H1 (cell line): ENCODE measurements at regions of chr17 and their contacts with region 1.

Region 1: DNA sequence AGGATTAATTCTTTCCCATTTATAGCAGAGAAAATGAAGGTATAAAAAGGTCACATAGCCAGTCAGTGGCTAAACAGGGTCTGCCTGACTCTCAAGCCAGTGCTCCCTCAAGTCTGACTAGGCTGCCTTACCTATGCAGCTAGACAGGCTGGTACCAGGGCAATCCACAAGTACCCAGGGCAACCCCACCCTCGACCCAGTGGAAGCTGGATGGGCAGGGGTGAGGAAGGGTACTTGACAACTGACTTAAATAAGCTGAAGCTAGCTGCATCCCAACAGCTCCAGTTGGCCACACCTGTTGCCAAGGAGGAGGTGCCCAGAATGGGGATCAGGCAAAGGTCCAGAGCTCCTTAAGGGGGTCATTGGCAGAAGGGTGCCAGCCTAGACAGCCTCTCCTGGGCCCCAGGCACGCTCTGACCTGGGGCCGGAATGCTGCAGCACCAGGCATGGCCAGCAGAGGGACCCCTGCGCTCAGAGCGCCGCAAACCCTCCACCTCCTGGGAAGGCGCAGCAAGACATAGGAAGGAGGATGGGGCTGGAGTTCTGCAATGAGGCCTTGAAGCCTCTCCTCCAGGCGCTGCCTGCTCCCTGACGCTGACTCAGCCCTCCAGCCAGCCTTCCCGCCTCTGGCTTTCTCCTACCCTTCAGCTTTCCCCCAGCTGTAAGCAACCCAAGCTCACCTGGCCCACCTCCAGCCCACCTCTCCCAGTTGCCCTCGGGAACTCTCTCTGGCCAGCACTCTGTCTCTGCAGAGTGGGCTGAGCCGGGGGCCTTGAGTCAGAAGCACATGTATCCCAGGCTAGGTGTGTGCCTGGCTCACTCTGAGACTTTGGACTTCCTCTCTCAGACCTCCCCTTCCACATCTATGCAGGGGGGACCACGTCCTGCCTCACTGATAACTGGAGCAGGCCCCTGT is 28.8 kb downstream of the MPP2 start:
- DNase-seq: peak; percentile 70 to 97
- H3K4me3 ChIP-seq: no peak overlapping the region
- H3K27ac ChIP-seq: no peak overlapping the region
- H3K4me1 ChIP-seq: peaks cover 0 to 8% (median 6%) of the 10 kb centered on the region in 4 experiments; a peak in 5 of 7 replicates
- H3K27me3 ChIP-seq: no peaks in the 10 kb centered on the region
- CTCF ChIP-seq: peak; percentile 93 to 99 (median 97)
- EP300 ChIP-seq: no peak
- POLR2A ChIP-seq: no peak
- RAD21 ChIP-seq: peak; percentile 82 to 88

Region 2: DNA sequence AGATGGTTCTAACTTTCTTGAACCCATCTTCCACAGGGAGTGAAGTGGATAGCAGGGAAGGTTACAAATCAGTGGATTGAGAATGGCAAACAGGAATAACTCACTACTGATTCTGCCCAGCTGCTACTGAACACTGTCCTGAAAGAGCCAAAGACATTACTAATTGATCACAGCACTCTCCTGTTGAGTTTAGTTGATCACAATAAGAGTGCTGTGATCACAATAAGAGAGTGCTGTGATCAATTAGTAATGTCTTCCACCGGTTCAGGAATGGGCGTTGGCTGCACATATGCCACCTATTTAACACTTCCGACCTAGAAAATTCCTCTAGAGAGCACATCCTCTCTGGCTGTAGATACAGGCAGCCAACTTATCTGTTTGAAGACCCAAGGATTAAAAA is 86.9 kb before region 1 on chr17:
- CTCF ChIA-PET with region 1: interaction called, 14 read pairs
- POLR2A ChIA-PET with region 1: no interaction called
- DNase-seq: no peak
- H3K4me3 ChIP-seq: peak overlapping the region in 1 of 4 experiments; percentile 17; a peak in 1 of 8 replicates
- H3K27ac ChIP-seq: no peak overlapping the region
- H3K4me1 ChIP-seq: no peaks in the 10 kb centered on the region; a peak in 1 of 7 replicates
- H3K27me3 ChIP-seq: no peaks in the 10 kb centered on the region
- CTCF ChIP-seq: no peak
- EP300 ChIP-seq: no peak
- POLR2A ChIP-seq: no peak
- RAD21 ChIP-seq: no peak

Region 3: DNA sequence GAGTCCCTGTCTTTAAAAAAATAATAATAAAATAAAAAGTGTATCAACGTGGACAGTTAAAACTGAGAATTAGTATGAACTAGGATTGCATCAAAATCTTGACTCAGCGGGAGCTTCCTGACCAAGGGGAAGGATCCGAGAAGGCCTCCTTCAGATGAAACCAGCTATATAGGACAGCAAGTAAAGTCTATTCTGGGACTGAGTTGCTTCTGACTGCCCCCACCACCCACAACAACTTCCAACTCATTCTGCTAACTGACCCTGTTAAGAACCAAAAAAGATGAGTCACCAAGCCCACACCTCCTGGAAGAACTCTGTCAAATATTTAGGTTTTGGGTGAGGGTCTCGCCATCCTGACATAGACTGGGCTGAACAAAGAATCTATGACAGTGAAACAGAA is 70.4 kb before region 1 on chr17:
- CTCF ChIA-PET with region 1: no interaction called
- POLR2A ChIA-PET with region 1: no interaction called
- DNase-seq: no peak
- H3K4me3 ChIP-seq: no peak overlapping the region
- H3K27ac ChIP-seq: no peak overlapping the region
- H3K4me1 ChIP-seq: peaks cover 0 to 16% (median 8%) of the 10 kb centered on the region in 4 experiments; a peak in 5 of 7 replicates
- H3K27me3 ChIP-seq: no peaks in the 10 kb centered on the region
- CTCF ChIP-seq: no peak
- EP300 ChIP-seq: no peak
- POLR2A ChIP-seq: no peak
- RAD21 ChIP-seq: no peak

Region 4: GRCh38 chr17:43846221-43846712 is 32.3 kb before region 1 on chr17:
- CTCF ChIA-PET with region 1: interaction called, 33 read pairs
- POLR2A ChIA-PET with region 1: no interaction called
- DNase-seq: peak; percentile 77 to 100
- H3K4me3 ChIP-seq: peak overlapping the region in 1 of 4 experiments; percentile 46; a peak in 1 of 8 replicates
- H3K27ac ChIP-seq: no peak overlapping the region
- H3K4me1 ChIP-seq: peaks cover 0 to 5% (median 1%) of the 10 kb centered on the region in 4 experiments; a peak in 2 of 7 replicates
- H3K27me3 ChIP-seq: peaks cover 0 to 3% (median 0%) of the 10 kb centered on the region in 4 experiments; a peak in 2 of 7 replicates
- CTCF ChIP-seq: peak; percentile 97 to 98 (median 97)
- EP300 ChIP-seq: no peak
- POLR2A ChIP-seq: no peak
- RAD21 ChIP-seq: peak; percentile 80 to 92

Region 5: GRCh38 chr17:43868226-43868994 is 10.1 kb before region 1 on chr17:
- CTCF ChIA-PET with region 1: interaction called, 61 read pairs
- POLR2A ChIA-PET with region 1: interaction called, 5 read pairs
- DNase-seq: no peak
- H3K4me3 ChIP-seq: no peak overlapping the region
- H3K27ac ChIP-seq: no peak overlapping the region
- H3K4me1 ChIP-seq: no peaks in the 10 kb centered on the region
- H3K27me3 ChIP-seq: peaks cover 0 to 3% (median 1%) of the 10 kb centered on the region in 4 experiments; a peak in 3 of 7 replicates
- CTCF ChIP-seq: no peak
- EP300 ChIP-seq: no peak
- POLR2A ChIP-seq: no peak
- RAD21 ChIP-seq: no peak

Region 6: DNA sequence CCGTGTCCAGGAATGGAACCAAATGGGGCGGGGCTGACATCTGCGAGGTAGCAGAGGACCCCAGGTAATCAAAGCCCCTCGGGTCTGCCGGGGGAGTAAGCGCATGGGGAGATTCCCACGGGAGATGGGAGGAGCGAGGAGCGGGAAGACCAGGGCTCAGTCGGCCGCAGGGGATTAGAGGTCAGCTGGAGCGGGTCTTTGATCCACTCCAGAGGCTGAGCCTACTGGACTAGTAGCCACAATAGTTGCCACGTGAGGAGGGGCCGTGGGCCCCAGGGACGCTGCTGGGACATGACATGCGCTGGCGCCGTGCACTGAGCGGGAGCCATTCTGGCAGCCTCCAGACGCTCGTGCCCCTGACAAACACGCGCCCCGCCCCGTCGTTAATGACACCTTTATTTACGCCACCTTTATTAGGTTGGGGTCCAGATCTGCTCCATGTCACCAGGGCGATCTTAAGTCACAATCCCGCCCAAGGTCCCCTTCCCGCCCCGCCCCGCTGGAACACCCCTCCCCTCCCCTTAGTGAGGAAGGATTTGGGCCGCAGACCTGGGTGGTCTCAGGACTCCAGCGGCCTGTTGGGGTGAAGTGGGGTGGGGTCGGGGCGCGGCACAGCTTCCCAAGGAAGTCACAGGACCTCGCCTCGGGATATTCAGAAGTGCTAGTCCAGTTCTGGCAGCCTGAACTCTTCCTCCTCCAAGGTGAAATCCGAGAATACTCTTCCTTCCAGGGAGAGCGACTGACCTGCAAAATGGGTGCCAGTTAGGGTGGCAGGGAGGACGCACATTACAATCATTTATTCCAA is 48.7 kb after region 1 on chr17:
- CTCF ChIA-PET with region 1: interaction called, 46 read pairs
- POLR2A ChIA-PET with region 1: no interaction called
- DNase-seq: no peak
- H3K4me3 ChIP-seq: peak overlapping the region; percentile 10 to 55 (median 34); a peak in 5 of 8 replicates
- H3K27ac ChIP-seq: no peak overlapping the region
- H3K4me1 ChIP-seq: peaks cover 0 to 7% (median 0%) of the 10 kb centered on the region in 4 experiments; a peak in 1 of 7 replicates
- H3K27me3 ChIP-seq: peaks cover 3 to 28% (median 15%) of the 10 kb centered on the region in 4 experiments
- CTCF ChIP-seq: no peak
- EP300 ChIP-seq: no peak
- POLR2A ChIP-seq: no peak
- RAD21 ChIP-seq: no peak

Region 7: GRCh38 chr17:43983515-43984411 is 105.2 kb after region 1 on chr17:
- CTCF ChIA-PET with region 1: interaction called, 31 read pairs
- POLR2A ChIA-PET with region 1: no interaction called
- DNase-seq: peak in 1 of 2 experiments; percentile 82
- H3K4me3 ChIP-seq: peak overlapping the region; percentile 53 to 75 (median 60)
- H3K27ac ChIP-seq: no peak overlapping the region
- H3K4me1 ChIP-seq: peaks cover 0 to 4% (median 2%) of the 10 kb centered on the region in 4 experiments; a peak in 4 of 7 replicates
- H3K27me3 ChIP-seq: peaks cover 0 to 5% (median 4%) of the 10 kb centered on the region in 4 experiments; a peak in 3 of 7 replicates
- CTCF ChIP-seq: peak; percentile 63 to 85 (median 80)
- EP300 ChIP-seq: no peak
- POLR2A ChIP-seq: no peak
- RAD21 ChIP-seq: peak; percentile 24 to 53